ENCODE measurements at regions of chr11 and their contacts with region 1.

Region 1: GRCh38 chr11:113752932-113753331 is 20.6 kb downstream of the ZW10 start:
- DNase-seq: no peak
- H3K4me3 ChIP-seq: no peak overlapping the region
- H3K27ac ChIP-seq: no peak overlapping the region
- H3K4me1 ChIP-seq: no peaks in the 10 kb centered on the region
- H3K27me3 ChIP-seq: no peaks in the 10 kb centered on the region
- CTCF ChIP-seq: no peak
- POLR2A ChIP-seq: no peak

Region 2: GRCh38 chr11:113314389-113315301 is 438.3 kb before region 1 on chr11 and contains the start of gene TTC12:
- intact Hi-C with region 1: loop called (anchors 10 kb)
- DNase-seq: peak; percentile 91 to 94
- H3K4me3 ChIP-seq: peak within 1 kb of the TSS; percentile 66 to 84 (median 72)
- H3K27ac ChIP-seq: peak within 1 kb of the TSS; percentile 90 to 94
- H3K4me1 ChIP-seq: no peaks in the 10 kb centered on the region
- H3K27me3 ChIP-seq: no peaks in the 10 kb centered on the region
- CTCF ChIP-seq: no peak
- POLR2A ChIP-seq: peak; percentile 20
- total RNA-seq, gene TTC12: 12.3 to 48.4 (median 43.6) TPM

Region 3: GRCh38 chr11:113690619-113691569 is 62.0 kb before region 1 on chr11:
- intact Hi-C with region 1: no loop called
- DNase-seq: peak in 1 of 2 donors; percentile 59
- H3K4me3 ChIP-seq: no peak overlapping the region
- H3K27ac ChIP-seq: peak overlapping the region in 1 of 2 donors; percentile 46
- H3K4me1 ChIP-seq: no peaks in the 10 kb centered on the region
- H3K27me3 ChIP-seq: no peaks in the 10 kb centered on the region
- CTCF ChIP-seq: no peak
- POLR2A ChIP-seq: no peak

Region 4: GRCh38 chr11:114466742-114467141 is 713.8 kb after region 1 on chr11:
- intact Hi-C with region 1: loop called (anchors 10 kb)
- DNase-seq: no peak
- H3K4me3 ChIP-seq: no peak overlapping the region
- H3K27ac ChIP-seq: no peak overlapping the region
- H3K4me1 ChIP-seq: no peaks in the 10 kb centered on the region
- H3K27me3 ChIP-seq: no peaks in the 10 kb centered on the region
- CTCF ChIP-seq: no peak
- POLR2A ChIP-seq: no peak

Measured in breast epithelium (tissue), 4 donors.